Head of caudate nucleus (tissue), 42 donors: ENCODE measurements at regions of chr2 and their contacts with region 1.

Region 1: GRCh38 chr2:30026087-30027055 is 105.0 kb upstream of the ALK start:
- DNase-seq: peak; percentile 55 to 89 (median 76)

Region 2: GRCh38 chr2:29923110-29923721 is 103.2 kb before region 1 on chr2:
- intact Hi-C with region 1: loop called (anchors 10 kb)
- DNase-seq: peak; percentile 26 to 87 (median 71)

Region 3: DNA sequence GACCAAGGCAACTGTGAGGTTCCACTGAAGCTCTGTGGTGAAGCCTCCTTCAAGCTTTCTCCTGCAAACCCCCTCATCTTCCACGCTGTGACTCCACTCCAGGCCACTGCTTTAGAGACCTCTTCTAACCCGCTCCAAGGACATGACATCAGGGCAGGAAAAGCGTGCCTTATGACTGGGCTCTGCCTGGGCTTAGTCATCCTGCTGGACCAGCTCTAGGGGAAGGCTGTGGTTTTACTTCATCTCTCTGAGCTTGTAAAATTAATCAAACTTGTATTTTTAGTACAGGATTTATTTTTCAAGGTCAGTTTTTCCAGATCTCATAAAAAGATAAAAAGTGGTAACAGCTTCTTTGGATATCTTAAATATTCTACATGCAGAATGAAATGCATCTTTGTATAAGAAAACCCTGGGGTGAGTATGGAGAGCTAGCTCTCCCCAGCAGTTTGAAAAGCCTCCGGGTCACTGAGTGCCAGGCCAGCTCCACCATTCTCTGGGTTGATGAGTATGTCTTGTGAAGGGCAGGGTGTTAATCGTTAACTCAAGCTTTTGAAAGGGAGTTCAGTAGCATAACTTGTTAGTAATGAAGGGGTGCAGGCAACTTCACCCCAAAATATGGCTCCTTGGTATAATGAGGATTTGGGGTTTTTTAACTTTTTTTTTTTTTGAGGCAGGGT is 87.4 kb after region 1 on chr2:
- intact Hi-C with region 1: no loop called
- DNase-seq: no peak

Region 4: DNA sequence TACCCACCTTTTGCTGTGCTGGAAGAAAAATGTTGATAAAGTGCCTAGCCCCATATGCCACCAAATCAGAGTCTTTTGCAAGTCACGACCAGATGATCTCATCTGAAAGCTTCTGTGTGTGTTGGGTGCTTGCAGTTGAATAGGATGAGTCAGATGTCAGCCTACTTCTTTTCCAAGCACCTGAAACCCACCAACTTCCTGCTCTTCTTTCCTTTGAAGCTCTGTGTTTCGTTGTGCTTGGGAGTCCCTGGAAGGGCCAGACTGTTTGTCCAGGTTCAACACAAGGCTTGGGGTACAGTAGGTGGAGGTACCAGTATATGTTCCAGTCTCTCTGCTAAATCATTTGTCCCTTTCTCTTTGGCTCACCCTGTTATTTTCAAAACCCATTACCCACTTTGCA is 383.8 kb after region 1 on chr2:
- intact Hi-C with region 1: no loop called
- DNase-seq: peak in 12 of 42 donors; percentile 8 to 65 (median 33)

Region 5: GRCh38 chr2:30580391-30580790 is 554.0 kb after region 1 on chr2:
- intact Hi-C with region 1: no loop called
- DNase-seq: no peak